CD8-positive, alpha-beta T cell (primary cell): ENCODE measurements at regions of chr5 and their contacts with region 1.

Region 1: GRCh38 chr5:392431-392988 is 50.5 kb upstream of the EXOC3 start:
- DNase-seq: peak; percentile 10 to 90 (median 62)
- ATAC-seq: peak; percentile 87
- H3K4me3 ChIP-seq: peak overlapping the region in 1 of 2 experiments; percentile 31
- H3K4me3 Mint-ChIP-seq: peak overlapping the region; percentile 76
- H3K27ac ChIP-seq: no peak overlapping the region
- H3K27ac Mint-ChIP-seq: peak overlapping the region; percentile 74
- H3K4me1 ChIP-seq: peaks cover 12% of the 10 kb centered on the region
- H3K4me1 Mint-ChIP-seq: peaks cover 22% of the 10 kb centered on the region
- H3K27me3 ChIP-seq: no peaks in the 10 kb centered on the region
- H3K27me3 Mint-ChIP-seq: peaks cover 2% of the 10 kb centered on the region
- CTCF ChIP-seq: no peak

Region 2: DNA sequence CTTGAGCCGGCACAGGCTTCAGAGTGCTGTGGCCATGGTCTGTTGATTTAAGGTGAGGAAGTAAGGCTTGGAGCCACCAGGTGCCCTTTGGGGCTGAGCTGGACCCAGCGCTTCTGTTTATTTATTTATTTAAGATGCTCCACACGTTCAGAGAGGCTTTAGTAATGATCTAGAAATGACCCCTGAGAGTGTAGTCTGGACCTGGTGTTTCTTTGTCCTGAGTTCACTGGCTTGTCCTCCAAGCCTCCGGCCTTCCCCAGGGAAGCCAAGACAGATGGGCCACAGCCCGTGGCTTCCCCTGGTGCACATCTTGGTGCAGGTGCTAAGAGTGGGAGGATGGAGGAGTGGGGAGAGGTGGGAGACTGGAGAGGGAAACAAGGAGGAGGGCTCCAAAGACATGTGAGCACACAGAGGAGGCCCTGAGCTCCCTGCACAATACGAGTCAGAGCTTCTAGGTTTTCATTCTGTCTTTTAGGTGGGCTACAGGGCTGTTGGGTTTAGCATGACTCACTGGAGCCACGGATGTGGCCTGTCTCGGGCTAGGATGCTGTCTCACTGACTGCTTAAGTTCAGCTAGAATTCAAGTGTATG is 14.1 kb before region 1 on chr5:
- CTCF ChIA-PET with region 1: no interaction called
- POLR2A ChIA-PET with region 1: interaction called, 4 read pairs
- intact Hi-C with region 1: loop called in 1 of 2 experiments (anchors 2 kb)
- DNase-seq: peak in 4 of 9 experiments; percentile 27 to 48 (median 44)
- ATAC-seq: peak; percentile 64
- H3K4me3 ChIP-seq: no peak overlapping the region
- H3K4me3 Mint-ChIP-seq: no peak overlapping the region
- H3K27ac ChIP-seq: no peak overlapping the region
- H3K27ac Mint-ChIP-seq: no peak overlapping the region
- H3K4me1 ChIP-seq: peaks cover 10% of the 10 kb centered on the region
- H3K4me1 Mint-ChIP-seq: peaks cover 10% of the 10 kb centered on the region
- H3K27me3 ChIP-seq: peaks cover 0 to under 1% of the 10 kb centered on the region in 2 experiments
- H3K27me3 Mint-ChIP-seq: peaks cover 2% of the 10 kb centered on the region
- CTCF ChIP-seq: no peak